ENCODE measurements at regions of chr10 and their contacts with region 1.

Region 1: DNA sequence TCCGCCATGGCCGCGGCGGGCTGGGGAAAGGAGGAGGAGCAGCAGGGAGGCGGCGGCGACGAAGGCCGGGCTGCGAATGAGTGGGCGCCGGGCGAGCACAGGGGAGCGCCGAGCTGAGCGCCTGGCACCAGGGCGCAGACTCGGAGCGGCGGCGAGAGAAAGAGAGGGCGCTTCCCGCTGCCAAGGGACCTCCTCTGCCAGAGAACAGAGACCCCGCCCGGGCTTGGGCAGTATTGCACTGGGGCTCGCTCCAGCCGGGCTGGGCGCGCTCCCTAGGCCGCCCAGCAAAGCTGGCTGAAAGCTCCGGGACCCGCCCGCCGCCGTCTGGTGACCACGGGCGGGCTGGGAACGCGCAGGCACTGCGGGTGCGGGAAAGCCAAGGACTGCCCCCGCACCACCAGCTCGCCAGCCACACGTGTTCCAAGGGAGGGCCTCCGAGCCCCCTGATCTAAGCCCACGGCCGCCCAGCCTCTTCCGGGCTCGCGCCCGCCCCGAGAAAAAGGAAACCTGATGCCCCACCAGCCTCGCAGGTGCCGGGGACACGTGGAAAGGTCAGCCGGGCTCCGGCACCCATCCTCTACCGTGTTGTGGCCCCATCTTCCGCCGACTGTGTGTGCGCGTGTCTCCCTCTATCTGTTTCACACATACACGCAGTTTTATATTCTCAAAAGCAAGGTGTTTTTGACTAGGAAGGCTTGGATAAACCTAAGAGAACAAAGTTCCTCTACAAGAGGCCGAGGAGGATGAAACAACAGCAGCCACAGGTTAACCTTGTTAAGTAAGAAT is at the start of gene CCDC6:
- DNase-seq: peak; percentile 86 to 94 (median 91)
- H3K4me3 ChIP-seq: peak within 1 kb of the TSS; percentile 71
- H3K4me3 Mint-ChIP-seq: peak within 1 kb of the TSS; percentile 95 to 97 (median 96)
- H3K27ac ChIP-seq: peak within 1 kb of the TSS; percentile 85
- H3K27ac Mint-ChIP-seq: peak within 1 kb of the TSS; percentile 92 to 99 (median 96)
- H3K4me1 ChIP-seq: peaks cover 39% of the 10 kb centered on the region
- H3K4me1 Mint-ChIP-seq: peaks cover 57 to 66% (median 60%) of the 10 kb centered on the region in 3 donors
- H3K27me3 ChIP-seq: no peaks in the 10 kb centered on the region
- H3K27me3 Mint-ChIP-seq: no peaks in the 10 kb centered on the region
- total RNA-seq, gene CCDC6: 52.0 to 53.0 TPM

Region 2: DNA sequence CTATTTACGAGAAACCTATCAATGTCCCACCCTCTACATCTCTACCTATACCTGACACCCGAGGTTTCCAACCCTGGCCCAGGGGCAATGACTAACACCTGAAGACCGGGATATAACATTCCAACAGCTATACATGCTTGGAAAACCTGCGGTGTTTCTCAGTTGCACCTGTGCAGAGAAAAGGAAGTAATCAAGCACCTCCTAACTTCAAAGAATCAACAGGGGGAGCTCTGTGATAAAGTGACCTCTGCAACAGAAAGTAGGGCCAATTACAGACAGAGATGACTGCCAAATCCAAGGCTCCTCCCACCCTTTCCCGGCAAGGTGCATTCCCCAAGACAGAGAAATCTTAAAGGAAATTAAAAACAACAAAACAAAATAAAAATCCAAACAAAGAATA is 41.5 kb before region 1 on chr10:
- CTCF ChIA-PET with region 1: interaction called, 10 read pairs
- POLR2A ChIA-PET with region 1: no interaction called
- DNase-seq: peak in 1 of 5 donors; percentile 21
- H3K4me3 ChIP-seq: no peak overlapping the region
- H3K4me3 Mint-ChIP-seq: peak overlapping the region in 5 of 7 donors; percentile 12 to 61 (median 45)
- H3K27ac ChIP-seq: no peak overlapping the region
- H3K27ac Mint-ChIP-seq: peak overlapping the region in 7 of 8 donors; percentile 24 to 79 (median 61)
- H3K4me1 ChIP-seq: peaks cover 12% of the 10 kb centered on the region
- H3K4me1 Mint-ChIP-seq: peaks cover 52 to 84% (median 78%) of the 10 kb centered on the region in 3 donors
- H3K27me3 ChIP-seq: no peaks in the 10 kb centered on the region
- H3K27me3 Mint-ChIP-seq: no peaks in the 10 kb centered on the region

Region 3: DNA sequence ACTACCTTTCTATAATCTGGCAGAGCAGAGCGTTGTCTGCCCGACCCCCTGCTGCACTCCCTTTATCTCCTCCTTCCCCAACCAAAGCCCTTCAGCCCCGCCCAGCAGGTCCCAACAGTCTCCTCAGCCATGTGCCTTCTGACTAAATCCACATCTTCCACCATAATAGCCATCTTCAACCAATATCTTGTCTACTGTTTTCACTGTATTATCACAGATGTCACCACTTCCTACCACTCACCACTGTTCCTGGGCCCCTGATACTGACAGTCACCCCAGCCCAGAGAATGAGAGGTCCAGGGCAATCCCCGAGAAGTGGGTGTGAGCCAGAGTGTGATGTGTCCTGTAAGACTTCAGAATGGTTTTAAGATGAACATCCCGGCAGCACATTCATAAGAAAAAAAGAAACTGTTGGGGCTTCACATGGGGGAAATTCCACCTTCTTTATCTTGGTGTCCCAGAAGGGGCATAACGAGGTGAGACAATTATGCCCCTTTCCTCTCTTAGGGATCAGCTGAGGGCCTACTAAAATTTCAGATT is 25.6 kb before region 1 on chr10:
- CTCF ChIA-PET with region 1: no interaction called
- POLR2A ChIA-PET with region 1: no interaction called
- DNase-seq: peak in 3 of 5 donors; percentile 23 to 39 (median 25)
- H3K4me3 ChIP-seq: no peak overlapping the region
- H3K4me3 Mint-ChIP-seq: peak overlapping the region; percentile 0 to 64 (median 25)
- H3K27ac ChIP-seq: no peak overlapping the region
- H3K27ac Mint-ChIP-seq: peak overlapping the region; percentile 0 to 64 (median 40)
- H3K4me1 ChIP-seq: peaks cover 49% of the 10 kb centered on the region
- H3K4me1 Mint-ChIP-seq: peaks cover 69 to 82% (median 81%) of the 10 kb centered on the region in 3 donors
- H3K27me3 ChIP-seq: no peaks in the 10 kb centered on the region
- H3K27me3 Mint-ChIP-seq: peaks cover 0 to 1% of the 10 kb centered on the region in 2 donors

Measured in CD8-positive, alpha-beta memory T cell (primary cell).